Transverse colon (tissue), 4 donors: ENCODE measurements at regions of chr2 and their contacts with region 1.

Region 1: GRCh38 chr2:175293776-175294175 is 112.3 kb upstream of the ATP5MC3 start:
- DNase-seq: no peak
- H3K4me3 ChIP-seq: no peak overlapping the region
- H3K27ac ChIP-seq: no peak overlapping the region
- H3K4me1 ChIP-seq: no peaks in the 10 kb centered on the region
- H3K27me3 ChIP-seq: peaks cover 14% of the 10 kb centered on the region
- CTCF ChIP-seq: no peak
- EP300 ChIP-seq: no peak
- POLR2A ChIP-seq: no peak

Region 2: DNA sequence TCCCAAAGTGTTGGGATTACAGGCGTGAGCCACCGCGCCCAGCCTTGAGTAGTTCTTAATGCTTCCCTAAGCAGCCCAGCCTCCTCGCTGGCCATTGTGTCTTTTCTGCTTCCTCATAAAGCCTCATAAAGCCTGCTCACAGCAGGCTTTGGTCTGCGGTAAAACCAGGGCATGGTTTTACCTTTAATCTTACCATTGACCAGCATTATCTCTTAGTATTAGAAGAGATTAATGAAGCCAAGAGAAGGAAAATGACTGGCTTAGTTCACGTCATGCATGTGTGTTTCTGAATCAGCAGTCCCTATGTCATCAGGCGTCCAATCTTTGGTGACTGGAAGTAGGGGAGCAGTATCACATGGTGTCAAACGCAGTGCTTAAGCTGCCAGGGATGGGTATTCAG is 1954.0 kb before region 1 on chr2:
- in situ Hi-C with region 1: no loop called
- intact Hi-C with region 1: loop called (anchors 5 kb)
- DNase-seq: no peak
- H3K4me3 ChIP-seq: no peak overlapping the region
- H3K27ac ChIP-seq: no peak overlapping the region
- H3K4me1 ChIP-seq: no peaks in the 10 kb centered on the region
- H3K27me3 ChIP-seq: no peaks in the 10 kb centered on the region
- CTCF ChIP-seq: no peak
- EP300 ChIP-seq: no peak
- POLR2A ChIP-seq: no peak

Region 3: GRCh38 chr2:175062787-175063585 is 230.8 kb before region 1 on chr2:
- in situ Hi-C with region 1: no loop called
- intact Hi-C with region 1: no loop called
- DNase-seq: no peak
- H3K4me3 ChIP-seq: no peak overlapping the region
- H3K27ac ChIP-seq: no peak overlapping the region
- H3K4me1 ChIP-seq: no peaks in the 10 kb centered on the region
- H3K27me3 ChIP-seq: no peaks in the 10 kb centered on the region
- CTCF ChIP-seq: no peak
- EP300 ChIP-seq: no peak
- POLR2A ChIP-seq: no peak